Activated naive CD4-positive, alpha-beta T cell treated with anti-CD3 and anti-CD28 coated beads, Interleukin-2, amount 10 ng/mL, durations not matched to agents 7 days and 5 days (primary cell): ENCODE measurements at regions of chr17 and their contacts with region 1.

Region 1: GRCh38 chr17:41665566-41666236 is 23.0 kb upstream of the EIF1 start:
- DNase-seq: peak; percentile 90
- H3K4me3 Mint-ChIP-seq: peak overlapping the region; percentile 83
- H3K27ac Mint-ChIP-seq: peak overlapping the region; percentile 98
- H3K4me1 Mint-ChIP-seq: peaks cover 47% of the 10 kb centered on the region
- H3K27me3 Mint-ChIP-seq: peaks cover 44% of the 10 kb centered on the region

Region 2: DNA sequence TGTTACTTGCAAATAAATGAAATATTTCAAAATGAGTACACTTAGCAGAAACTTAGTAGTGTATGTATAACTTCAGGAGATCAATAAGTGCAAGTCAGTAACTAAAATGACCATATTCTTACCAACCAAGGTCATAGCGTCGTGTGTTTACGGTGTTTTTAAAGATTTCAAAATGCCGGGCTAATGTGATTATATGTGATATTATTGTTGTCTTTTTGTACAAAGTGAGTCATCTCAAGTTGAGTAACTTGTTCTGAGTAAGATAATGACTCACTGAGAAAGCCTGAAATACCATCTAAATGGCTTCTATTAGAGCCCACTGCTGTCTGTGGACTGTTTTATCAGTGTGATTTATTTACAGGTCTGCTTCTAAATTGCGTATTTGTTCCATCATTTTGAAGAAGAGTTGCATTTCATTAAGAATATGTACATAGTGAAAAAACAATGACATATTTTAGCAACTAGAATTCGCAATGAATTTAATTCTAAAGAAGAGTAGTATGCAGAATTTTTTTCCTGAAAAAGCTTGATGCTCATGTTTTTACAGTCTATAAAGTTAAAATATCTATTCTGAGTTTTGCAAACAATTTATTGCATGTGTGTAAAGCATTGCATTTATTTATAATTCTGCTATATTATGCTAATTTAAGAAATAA is 811.4 kb before region 1 on chr17:
- CTCF ChIA-PET with region 1: interaction called, 13 read pairs
- DNase-seq: no peak
- H3K4me3 Mint-ChIP-seq: no peak overlapping the region
- H3K27ac Mint-ChIP-seq: no peak overlapping the region
- H3K4me1 Mint-ChIP-seq: peaks cover 2% of the 10 kb centered on the region
- H3K27me3 Mint-ChIP-seq: peaks cover 4% of the 10 kb centered on the region

Region 3: DNA sequence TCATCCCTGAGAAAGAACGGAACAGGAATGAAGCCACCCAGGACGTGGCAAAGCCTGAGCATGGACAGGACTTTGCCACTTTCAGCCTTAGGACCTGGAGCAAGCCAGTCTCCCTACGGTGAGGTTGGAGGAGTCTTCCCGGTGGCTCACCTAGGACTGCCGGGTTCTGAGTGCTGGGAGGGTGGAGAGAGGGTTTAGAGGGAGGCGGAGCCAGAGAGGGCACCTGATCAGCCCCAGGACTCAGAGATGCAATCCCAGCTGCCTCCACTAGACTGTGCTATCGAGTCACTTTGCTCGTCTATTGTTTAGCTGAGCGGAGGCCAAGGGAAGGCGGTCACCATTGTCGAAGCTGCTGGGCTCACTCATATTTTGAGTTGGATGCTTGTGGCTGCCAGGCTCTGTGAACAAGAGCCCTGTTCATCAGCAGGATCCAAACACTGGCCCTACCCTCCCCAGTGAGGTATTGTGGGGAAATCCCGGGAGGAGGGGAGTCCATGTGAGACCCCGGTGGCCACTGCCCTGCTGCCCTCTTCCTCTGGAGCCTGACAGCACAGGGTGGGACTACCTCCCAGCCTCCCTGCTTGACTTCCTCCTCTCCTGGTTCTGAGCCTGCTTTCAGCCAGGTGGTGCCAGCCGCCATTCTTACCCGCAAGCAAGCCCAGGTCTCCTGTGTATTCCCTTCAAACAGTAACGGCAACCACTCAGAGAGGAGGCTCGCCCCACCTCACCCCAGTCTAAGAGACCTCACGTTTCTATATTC is 86.0 kb before region 1 on chr17:
- CTCF ChIA-PET with region 1: interaction called, 10 read pairs
- DNase-seq: peak; percentile 85
- H3K4me3 Mint-ChIP-seq: no peak overlapping the region
- H3K27ac Mint-ChIP-seq: no peak overlapping the region
- H3K4me1 Mint-ChIP-seq: no peaks in the 10 kb centered on the region
- H3K27me3 Mint-ChIP-seq: peaks cover 80% of the 10 kb centered on the region

Region 4: DNA sequence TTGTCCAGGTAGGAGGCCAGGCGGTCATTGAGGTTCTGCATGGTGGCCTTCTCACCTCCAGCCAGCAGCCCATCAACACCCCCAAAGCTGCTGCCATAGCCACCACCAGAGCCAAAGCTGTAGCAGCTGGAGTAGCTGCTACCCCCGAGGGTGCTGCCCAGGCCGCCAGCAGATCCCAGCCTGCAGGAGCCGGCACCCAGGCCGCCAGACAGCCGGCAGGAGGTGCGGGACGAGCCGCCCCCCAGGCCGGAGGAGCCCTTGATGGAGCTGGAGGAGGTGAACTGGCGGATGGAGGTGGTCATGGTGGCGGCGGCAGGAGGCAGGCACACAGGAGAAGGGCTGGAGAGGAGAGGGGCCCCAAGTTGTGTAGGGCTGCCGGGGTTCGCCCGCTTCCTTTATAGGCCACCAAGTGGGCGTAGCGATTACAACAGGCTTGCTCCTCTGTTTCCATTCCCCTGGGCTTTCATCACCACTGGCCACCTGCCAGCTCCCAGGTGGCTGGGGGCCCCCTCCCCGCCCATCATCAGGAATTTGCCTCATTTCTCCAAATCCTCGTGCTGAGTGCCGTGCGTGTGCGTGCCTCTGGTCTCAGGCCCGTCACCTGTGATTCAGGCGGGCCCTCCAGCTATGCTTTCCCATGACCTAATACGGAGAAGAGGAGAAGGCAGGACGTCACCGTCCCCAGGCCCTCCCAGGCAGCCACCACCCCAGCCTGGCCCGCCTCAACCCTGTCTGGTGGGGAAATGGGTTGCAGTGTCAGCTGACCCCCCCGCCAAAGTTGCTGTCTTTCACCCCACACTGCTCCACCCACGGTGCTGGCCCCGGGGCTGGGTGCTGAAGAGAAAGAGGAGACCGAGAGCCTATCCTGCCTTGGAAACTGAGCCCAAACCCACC is 41.2 kb before region 1 on chr17 and contains the start of gene KRT17:
- CTCF ChIA-PET with region 1: no interaction called
- DNase-seq: no peak
- H3K4me3 Mint-ChIP-seq: no peak within 1 kb of the TSS
- H3K27ac Mint-ChIP-seq: no peak within 1 kb of the TSS
- H3K4me1 Mint-ChIP-seq: no peaks in the 10 kb centered on the region
- H3K27me3 Mint-ChIP-seq: peaks cover 4% of the 10 kb centered on the region

Region 5: DNA sequence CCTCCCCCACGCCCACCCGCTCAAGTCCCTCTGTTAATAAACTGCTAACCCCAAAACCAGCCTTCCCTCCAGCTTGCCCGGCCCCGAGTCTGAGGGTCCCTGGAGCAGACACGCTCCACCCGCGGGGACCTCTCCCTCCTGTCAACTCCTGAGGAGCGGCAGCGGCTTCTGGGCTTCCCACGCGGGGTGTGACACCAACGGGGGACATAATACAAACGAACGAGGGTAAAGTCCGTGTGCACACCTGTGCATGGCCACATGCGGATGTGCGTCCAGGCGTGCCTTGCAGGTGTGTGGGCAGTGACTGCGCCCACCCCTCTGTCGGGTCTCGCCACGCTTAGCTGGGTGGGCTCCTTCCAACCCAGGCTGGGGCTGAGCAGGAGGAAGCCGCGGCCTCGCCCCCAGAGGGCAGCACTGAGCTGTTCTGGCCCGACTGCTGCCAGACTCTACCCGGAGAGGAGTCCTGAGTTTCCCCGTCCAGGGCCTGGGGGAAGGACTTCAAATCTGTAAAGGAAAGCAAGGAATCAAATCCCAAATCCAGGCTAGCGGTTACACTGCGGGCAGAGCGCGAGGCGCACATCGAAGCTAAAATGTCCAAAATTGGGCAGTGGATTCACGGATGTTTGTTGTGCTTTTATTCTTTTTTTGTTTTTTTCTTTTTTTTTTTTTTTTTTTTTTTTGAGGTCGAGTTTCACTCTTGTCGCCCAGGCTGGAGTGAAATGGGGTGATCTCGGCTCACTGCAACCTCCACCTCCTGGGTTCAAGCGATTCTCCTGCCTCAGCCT is 17.1 kb before region 1 on chr17:
- CTCF ChIA-PET with region 1: interaction called, 311 read pairs
- DNase-seq: peak; percentile 88
- H3K4me3 Mint-ChIP-seq: peak overlapping the region; percentile 46
- H3K27ac Mint-ChIP-seq: no peak overlapping the region
- H3K4me1 Mint-ChIP-seq: peaks cover 10% of the 10 kb centered on the region
- H3K27me3 Mint-ChIP-seq: peaks cover 20% of the 10 kb centered on the region

Region 6: GRCh38 chr17:41678907-41679739 is 13.4 kb after region 1 on chr17:
- CTCF ChIA-PET with region 1: interaction called, 111 read pairs
- DNase-seq: peak; percentile 85
- H3K4me3 Mint-ChIP-seq: peak overlapping the region; percentile 86
- H3K27ac Mint-ChIP-seq: peak overlapping the region; percentile 98
- H3K4me1 Mint-ChIP-seq: peaks cover 64% of the 10 kb centered on the region
- H3K27me3 Mint-ChIP-seq: peaks cover 13% of the 10 kb centered on the region

Region 7: GRCh38 chr17:41688699-41689496 is 23.2 kb after region 1 on chr17 and contains the start of gene EIF1:
- CTCF ChIA-PET with region 1: interaction called, 52 read pairs
- DNase-seq: peak; percentile 100
- H3K4me3 Mint-ChIP-seq: peak within 1 kb of the TSS; percentile 96
- H3K27ac Mint-ChIP-seq: peak within 1 kb of the TSS; percentile 100
- H3K4me1 Mint-ChIP-seq: peaks cover 39% of the 10 kb centered on the region
- H3K27me3 Mint-ChIP-seq: peaks cover 13% of the 10 kb centered on the region